PC-9 (cell line): ENCODE measurements at regions of chr12 and their contacts with region 1.

Region 1: GRCh38 chr12:55642267-55642666 is 5.6 kb downstream of the OR10P1 start:
- DNase-seq: no peak
- H3K4me3 ChIP-seq: no peak overlapping the region
- H3K27ac ChIP-seq: no peak overlapping the region
- H3K4me1 ChIP-seq: no peaks in the 10 kb centered on the region
- H3K27me3 ChIP-seq: peaks cover 71% of the 10 kb centered on the region
- CTCF ChIP-seq: no peak

Region 2: DNA sequence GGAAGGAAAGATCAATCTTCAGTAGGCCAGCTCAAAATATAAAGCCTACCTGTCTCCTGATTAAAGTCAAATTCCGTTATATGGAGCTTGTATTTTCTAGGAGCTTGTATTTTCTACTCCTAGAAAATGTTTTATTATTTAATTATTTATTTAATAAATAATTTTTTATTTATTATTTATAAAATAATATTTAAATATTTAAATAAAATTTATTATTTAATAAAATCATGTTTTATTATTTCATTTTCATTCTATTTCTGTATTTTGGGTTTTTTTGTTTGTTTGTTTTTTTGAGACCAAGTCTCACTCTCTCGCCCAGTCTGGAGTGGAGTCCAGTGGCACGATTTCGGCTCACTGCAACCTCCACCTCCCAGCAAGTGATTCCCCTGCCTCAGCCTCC is 269.7 kb before region 1 on chr12:
- CTCF ChIA-PET with region 1: no interaction called
- POLR2A ChIA-PET with region 1: no interaction called
- intact Hi-C with region 1: no loop called
- DNase-seq: no peak
- H3K4me3 ChIP-seq: no peak overlapping the region
- H3K27ac ChIP-seq: no peak overlapping the region
- H3K4me1 ChIP-seq: no peaks in the 10 kb centered on the region
- H3K27me3 ChIP-seq: no peaks in the 10 kb centered on the region
- CTCF ChIP-seq: no peak

Region 3: DNA sequence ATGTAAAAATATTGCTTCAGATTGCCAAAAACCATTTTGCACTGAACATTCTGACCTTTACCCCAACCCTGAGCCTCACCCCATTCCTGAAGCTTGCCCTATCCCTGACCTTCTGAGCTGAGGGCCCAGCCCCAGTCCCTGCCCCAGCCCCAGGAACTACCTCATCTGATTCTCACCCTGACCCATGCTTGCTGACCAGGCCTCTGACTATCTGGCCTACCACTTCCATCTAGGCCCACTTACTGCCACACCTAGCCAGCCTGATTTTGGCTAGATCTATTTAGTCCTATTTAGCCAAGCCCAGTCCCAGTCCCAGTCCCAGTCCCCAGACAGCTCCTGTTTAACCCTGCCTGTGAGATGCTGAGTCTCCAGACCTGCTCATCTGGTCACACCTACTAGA is 28.0 kb after region 1 on chr12:
- CTCF ChIA-PET with region 1: interaction called, 18 read pairs
- POLR2A ChIA-PET with region 1: no interaction called
- intact Hi-C with region 1: no loop called
- DNase-seq: no peak
- H3K4me3 ChIP-seq: no peak overlapping the region
- H3K27ac ChIP-seq: no peak overlapping the region
- H3K4me1 ChIP-seq: no peaks in the 10 kb centered on the region
- H3K27me3 ChIP-seq: no peaks in the 10 kb centered on the region
- CTCF ChIP-seq: no peak